Posterior vena cava (tissue), 2 donors: ENCODE measurements at regions of chr3 and their contacts with region 1.

Region 1: GRCh38 chr3:180594631-180595558 is 7.1 kb upstream of the TTC14 start:
- DNase-seq: no peak

Region 2: DNA sequence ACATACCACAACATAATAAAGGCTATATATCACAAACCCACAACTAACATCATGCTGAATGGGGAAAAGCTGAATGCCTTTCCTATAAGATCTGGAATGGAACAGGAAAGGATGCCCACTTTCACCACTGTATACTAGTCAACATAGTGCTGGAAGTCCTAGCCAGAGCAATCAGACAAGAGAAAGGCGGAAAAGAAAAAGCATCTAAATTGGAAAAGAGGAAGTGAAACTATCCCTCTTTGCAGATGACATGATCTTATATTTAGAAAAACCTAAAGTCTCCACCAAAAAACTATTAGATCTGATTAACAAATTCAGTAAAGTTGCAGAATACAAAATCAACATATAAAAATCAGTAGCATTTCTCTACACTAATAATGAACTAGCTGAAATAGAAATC is 1461.3 kb before region 1 on chr3:
- intact Hi-C with region 1: no loop called
- DNase-seq: no peak

Region 3: DNA sequence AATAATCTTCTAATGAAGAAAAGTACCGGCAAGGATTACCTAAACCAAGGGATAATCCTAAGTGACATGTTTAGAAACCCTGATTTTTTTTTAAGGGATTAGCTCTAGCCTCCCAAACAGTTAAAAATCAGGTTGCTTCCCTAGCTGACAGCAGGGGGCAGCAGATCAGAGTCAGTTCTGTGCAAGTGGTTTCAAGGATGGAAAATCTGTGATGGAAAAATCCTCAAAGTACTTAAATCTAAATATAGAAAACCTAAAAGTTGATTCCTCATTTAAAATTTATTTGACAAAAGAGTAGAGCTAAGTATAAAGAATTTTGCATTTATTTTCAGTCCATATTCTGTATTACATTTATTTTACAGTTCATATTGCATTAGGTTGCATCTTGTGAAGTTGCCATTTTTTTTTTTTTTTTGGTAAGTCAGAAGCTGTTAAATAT is 665.8 kb before region 1 on chr3:
- intact Hi-C with region 1: loop called in 1 of 2 experiments (anchors 10 kb)
- DNase-seq: no peak